CD4-positive, alpha-beta memory T cell (primary cell): ENCODE measurements at regions of chr11 and their contacts with region 1.

Region 1: DNA sequence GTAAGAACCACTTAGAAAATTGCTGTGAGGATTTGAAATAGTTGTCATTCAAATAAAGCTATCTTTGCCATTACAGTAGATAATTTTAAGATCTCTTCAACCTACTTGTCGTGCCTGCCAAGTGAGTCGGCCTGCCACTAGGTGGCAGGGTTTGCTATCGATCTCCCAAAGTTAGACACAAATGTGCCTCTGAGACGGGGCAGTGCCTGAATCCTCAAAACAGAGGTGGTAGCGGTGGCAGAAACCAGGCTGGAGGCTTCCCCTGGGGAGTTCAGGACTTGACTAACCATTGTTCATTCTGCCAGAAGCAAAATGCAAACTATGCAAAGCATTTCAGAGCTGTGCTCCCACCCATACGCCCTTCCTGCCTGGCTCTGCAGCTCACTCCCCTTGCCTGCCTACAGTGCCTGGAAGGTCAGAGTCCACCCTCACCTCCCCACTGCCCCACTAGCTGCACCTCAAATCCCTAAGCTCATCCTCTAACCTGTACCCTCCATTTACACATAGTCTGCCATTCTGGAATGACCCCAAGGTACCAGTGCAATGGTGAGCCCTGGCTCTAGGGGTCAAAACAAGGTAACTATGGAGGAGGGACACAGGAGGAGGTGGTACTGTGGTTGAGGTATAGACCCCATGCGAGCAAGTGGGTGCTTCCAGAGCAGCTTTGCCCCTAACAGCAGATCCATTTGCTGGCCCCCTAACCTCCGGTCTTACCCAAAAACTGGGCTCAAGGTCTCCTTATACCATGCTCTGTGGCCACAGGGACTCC is 82.1 kb downstream of the C11orf58 start:
- DNase-seq: peak; percentile 6 to 59 (median 27)
- H3K4me3 ChIP-seq: no peak overlapping the region
- H3K4me3 Mint-ChIP-seq: peak overlapping the region in 1 of 8 donors; percentile 60
- H3K27ac ChIP-seq: no peak overlapping the region
- H3K27ac Mint-ChIP-seq: no peak overlapping the region
- H3K4me1 ChIP-seq: no peaks in the 10 kb centered on the region
- H3K4me1 Mint-ChIP-seq: peaks cover 5 to 7% (median 6%) of the 10 kb centered on the region in 4 donors
- H3K27me3 ChIP-seq: no peaks in the 10 kb centered on the region
- H3K27me3 Mint-ChIP-seq: no peaks in the 10 kb centered on the region

Region 2: GRCh38 chr11:16809886-16810668 is 10.4 kb before region 1 on chr11:
- CTCF ChIA-PET with region 1: interaction called, 49 read pairs
- POLR2A ChIA-PET with region 1: no interaction called
- intact Hi-C with region 1: no loop called
- DNase-seq: no peak
- H3K4me3 ChIP-seq: no peak overlapping the region
- H3K4me3 Mint-ChIP-seq: no peak overlapping the region
- H3K27ac ChIP-seq: no peak overlapping the region
- H3K27ac Mint-ChIP-seq: peak overlapping the region in 2 of 7 donors; percentile 3 to 11
- H3K4me1 ChIP-seq: no peaks in the 10 kb centered on the region
- H3K4me1 Mint-ChIP-seq: peaks cover 1 to 16% (median 7%) of the 10 kb centered on the region in 4 donors
- H3K27me3 ChIP-seq: no peaks in the 10 kb centered on the region
- H3K27me3 Mint-ChIP-seq: no peaks in the 10 kb centered on the region

Region 3: GRCh38 chr11:16831316-16832192 is 11.0 kb after region 1 on chr11:
- CTCF ChIA-PET with region 1: interaction called, 34 read pairs
- POLR2A ChIA-PET with region 1: no interaction called
- intact Hi-C with region 1: no loop called
- DNase-seq: no peak
- H3K4me3 ChIP-seq: no peak overlapping the region
- H3K4me3 Mint-ChIP-seq: no peak overlapping the region
- H3K27ac ChIP-seq: no peak overlapping the region
- H3K27ac Mint-ChIP-seq: no peak overlapping the region
- H3K4me1 ChIP-seq: no peaks in the 10 kb centered on the region
- H3K4me1 Mint-ChIP-seq: no peaks in the 10 kb centered on the region
- H3K27me3 ChIP-seq: no peaks in the 10 kb centered on the region
- H3K27me3 Mint-ChIP-seq: no peaks in the 10 kb centered on the region

Region 4: DNA sequence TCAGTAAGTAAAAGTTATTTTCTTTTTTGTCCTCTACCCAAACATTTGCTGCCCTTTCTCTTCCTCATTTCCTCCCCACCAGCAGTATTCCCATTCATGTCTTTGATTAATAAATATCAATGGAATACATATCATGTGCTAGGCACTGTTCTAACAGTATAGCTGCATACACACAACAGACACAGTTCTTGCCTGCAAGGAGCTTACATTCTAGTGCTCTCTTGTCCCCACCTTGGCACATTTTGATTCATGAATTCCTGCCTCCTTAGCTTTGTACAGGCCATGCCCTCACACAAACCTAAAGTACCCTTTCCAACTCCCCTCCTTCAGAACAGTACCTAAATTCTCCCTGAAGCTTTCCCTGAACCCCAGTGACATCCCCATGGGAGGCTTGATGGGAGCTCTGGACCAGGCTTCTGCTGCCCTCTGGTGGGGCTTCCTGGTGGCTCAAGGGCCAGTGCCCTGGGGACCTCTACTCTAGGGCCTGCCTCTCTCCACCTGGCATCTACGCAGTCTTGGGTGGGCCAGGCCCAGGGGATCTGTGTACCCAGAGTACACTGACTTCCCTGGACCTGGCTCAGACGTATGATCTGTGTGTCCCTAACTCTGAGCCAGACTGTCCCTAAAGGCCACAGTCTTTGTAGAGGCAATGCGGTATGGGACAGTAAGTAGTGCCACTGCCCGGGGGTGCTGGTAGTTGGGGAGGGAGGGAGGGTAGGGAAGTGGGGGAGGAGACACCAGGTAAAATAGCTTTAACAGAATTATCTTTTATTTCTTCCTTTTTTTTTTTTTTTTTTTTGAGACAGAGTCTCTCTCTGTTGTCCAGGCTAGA is 242.9 kb after region 1 on chr11:
- CTCF ChIA-PET with region 1: interaction called, 22 read pairs
- POLR2A ChIA-PET with region 1: no interaction called
- intact Hi-C with region 1: no loop called
- DNase-seq: peak; percentile 11 to 38 (median 20)
- H3K4me3 ChIP-seq: no peak overlapping the region
- H3K4me3 Mint-ChIP-seq: no peak overlapping the region
- H3K27ac ChIP-seq: no peak overlapping the region
- H3K27ac Mint-ChIP-seq: peak overlapping the region in 1 of 7 donors; percentile 82
- H3K4me1 ChIP-seq: no peaks in the 10 kb centered on the region
- H3K4me1 Mint-ChIP-seq: no peaks in the 10 kb centered on the region
- H3K27me3 ChIP-seq: no peaks in the 10 kb centered on the region
- H3K27me3 Mint-ChIP-seq: no peaks in the 10 kb centered on the region